Esophagus squamous epithelium (tissue), 5 donors: ENCODE measurements at regions of chr12 and their contacts with region 1.

Region 1: DNA sequence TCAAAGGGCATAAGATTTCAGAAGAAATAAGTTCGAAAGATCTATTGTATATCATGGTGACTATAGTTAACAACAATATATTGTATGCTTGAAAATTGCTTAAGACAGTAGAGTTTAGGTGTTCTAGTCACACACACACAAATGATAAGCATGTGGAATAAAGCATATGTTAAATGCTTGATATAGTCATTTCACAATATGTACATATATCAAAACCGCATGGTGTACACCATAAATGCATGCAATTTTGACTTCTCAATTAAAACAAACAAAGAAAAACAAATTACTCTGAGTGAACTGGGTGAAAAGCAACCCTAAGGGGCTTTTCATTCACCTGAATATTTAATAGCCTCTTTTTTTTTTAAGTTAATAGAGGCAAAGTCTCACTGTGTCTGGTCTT is 40.3 kb upstream of the BCAT1 start:
- DNase-seq: no peak
- H3K4me3 ChIP-seq: no peak overlapping the region
- H3K27ac ChIP-seq: no peak overlapping the region
- H3K4me1 ChIP-seq: no peaks in the 10 kb centered on the region
- H3K27me3 ChIP-seq: no peaks in the 10 kb centered on the region
- CTCF ChIP-seq: no peak
- POLR2A ChIP-seq: no peak

Region 2: GRCh38 chr12:24948757-24949722 is 40.2 kb before region 1 on chr12 and contains the start of gene BCAT1:
- intact Hi-C with region 1: no loop called
- DNase-seq: no peak
- H3K4me3 ChIP-seq: peak within 1 kb of the TSS; percentile 19 to 75 (median 50)
- H3K27ac ChIP-seq: peak within 1 kb of the TSS in 3 of 4 donors; percentile 11 to 34 (median 15)
- H3K4me1 ChIP-seq: peaks cover 0 to 14% (median 7%) of the 10 kb centered on the region in 3 donors
- H3K27me3 ChIP-seq: peaks cover 0 to 52% (median 3%) of the 10 kb centered on the region in 4 donors
- CTCF ChIP-seq: peak in 1 of 6 experiments; percentile 2
- POLR2A ChIP-seq: no peak
- total RNA-seq, gene BCAT1: 0.87 to 28.3 (median 9.6) TPM

Region 3: DNA sequence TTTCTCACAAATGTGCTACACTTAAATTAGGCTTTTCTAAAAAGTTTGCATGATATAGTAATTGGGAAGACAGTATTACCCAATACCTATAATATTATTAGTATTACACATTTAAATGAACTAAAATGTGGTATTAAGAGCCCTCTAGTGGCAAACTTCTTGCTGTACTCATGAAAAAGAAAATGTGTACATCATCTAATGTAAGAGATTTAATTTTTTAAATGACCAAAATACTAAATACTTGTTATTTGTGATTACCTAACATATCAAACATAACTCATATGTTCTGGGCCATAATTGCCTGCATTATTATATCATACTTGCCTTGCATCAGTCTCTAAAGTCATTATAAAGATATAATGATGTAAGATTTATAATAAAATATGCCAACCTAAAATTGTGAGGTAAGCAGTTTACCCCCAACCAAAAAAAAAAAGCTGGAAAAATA is 141.5 kb after region 1 on chr12:
- intact Hi-C with region 1: loop called (anchors 5 kb)
- DNase-seq: no peak
- H3K4me3 ChIP-seq: no peak overlapping the region
- H3K27ac ChIP-seq: no peak overlapping the region
- H3K4me1 ChIP-seq: peaks cover 0 to 9% (median 3%) of the 10 kb centered on the region in 3 donors
- H3K27me3 ChIP-seq: no peaks in the 10 kb centered on the region
- CTCF ChIP-seq: peak; percentile 28 to 81 (median 56)
- POLR2A ChIP-seq: no peak

Region 4: DNA sequence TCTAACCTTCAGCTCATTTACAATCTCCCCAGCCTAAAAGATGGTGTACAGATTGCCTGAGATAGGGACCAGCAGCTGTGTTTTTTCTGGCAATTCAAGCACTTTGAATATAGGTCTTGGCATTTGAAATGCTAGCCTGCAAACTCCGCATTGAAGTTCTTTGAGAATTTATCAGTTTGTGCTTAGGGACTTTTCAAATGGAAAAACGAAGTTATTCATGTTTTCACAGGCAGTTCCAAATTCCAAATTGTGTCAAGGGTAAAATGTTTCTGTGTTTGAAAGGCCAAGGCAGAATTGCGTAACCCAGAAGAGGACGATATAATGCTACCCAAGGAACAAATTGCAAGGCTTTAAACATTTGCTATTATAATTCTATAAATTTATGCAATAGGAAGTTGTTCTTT is 800.3 kb after region 1 on chr12:
- intact Hi-C with region 1: no loop called
- DNase-seq: no peak
- H3K4me3 ChIP-seq: no peak overlapping the region
- H3K27ac ChIP-seq: peak overlapping the region in 2 of 4 donors; percentile 3 to 22
- H3K4me1 ChIP-seq: peaks cover 0 to 13% (median 0%) of the 10 kb centered on the region in 3 donors
- H3K27me3 ChIP-seq: no peaks in the 10 kb centered on the region
- CTCF ChIP-seq: no peak
- POLR2A ChIP-seq: no peak